ENCODE measurements at regions of chr2 and their contacts with region 1.

Region 1: DNA sequence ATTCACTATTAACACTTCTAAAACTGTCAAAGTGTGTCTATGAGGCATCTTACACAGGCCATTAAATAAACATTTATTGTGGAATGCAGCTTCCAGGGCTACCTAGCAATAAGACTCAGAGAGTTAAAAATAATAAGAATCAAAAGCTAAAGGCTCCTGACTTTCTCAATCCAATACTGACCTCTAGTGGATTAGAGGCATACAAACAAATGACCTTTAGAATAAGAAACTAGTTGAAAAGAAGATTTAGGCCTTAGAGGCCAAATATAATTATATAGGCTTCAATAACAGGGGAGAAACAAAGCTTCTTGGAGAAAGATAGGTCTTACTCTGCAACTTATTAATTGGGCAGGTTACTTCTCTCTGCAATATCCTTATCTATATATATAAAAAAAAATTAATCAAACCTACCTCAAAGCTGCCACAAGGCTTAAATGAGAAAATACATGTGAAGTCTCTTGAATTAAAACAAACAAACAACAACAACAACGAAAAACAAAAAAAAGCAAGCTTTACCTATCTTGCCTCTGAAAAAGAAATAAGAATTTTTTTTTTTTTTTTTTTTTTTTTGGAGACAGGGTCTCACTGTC is 246.1 kb downstream of the EXOC6B start:
- DNase-seq: no peak
- H3K4me3 ChIP-seq: no peak overlapping the region
- H3K27ac ChIP-seq: no peak overlapping the region
- H3K4me1 ChIP-seq: peaks cover 0 to 11% (median 0%) of the 10 kb centered on the region in 4 donors
- H3K27me3 ChIP-seq: no peaks in the 10 kb centered on the region
- CTCF ChIP-seq: peak; percentile 51 to 68 (median 56)
- EP300 ChIP-seq: no peak
- POLR2A ChIP-seq: no peak

Region 2: GRCh38 chr2:71545572-71546274 is 1034.0 kb before region 1 on chr2:
- in situ Hi-C with region 1: loop called in 3 of 4 experiments (anchors 25 kb)
- intact Hi-C with region 1: no loop called
- DNase-seq: peak; percentile 36
- H3K4me3 ChIP-seq: peak overlapping the region in 3 of 4 donors; percentile 3 to 29 (median 11)
- H3K27ac ChIP-seq: peak overlapping the region in 1 of 4 donors; percentile 39
- H3K4me1 ChIP-seq: peaks cover 0 to 19% (median 8%) of the 10 kb centered on the region in 4 donors
- H3K27me3 ChIP-seq: peaks cover 10% of the 10 kb centered on the region
- CTCF ChIP-seq: peak; percentile 54 to 61 (median 58)
- EP300 ChIP-seq: no peak
- POLR2A ChIP-seq: no peak

Region 3: GRCh38 chr2:71558300-71559051 is 1021.2 kb before region 1 on chr2:
- in situ Hi-C with region 1: loop called in 1 of 4 experiments (anchors 25 kb)
- intact Hi-C with region 1: no loop called
- DNase-seq: no peak
- H3K4me3 ChIP-seq: no peak overlapping the region
- H3K27ac ChIP-seq: no peak overlapping the region
- H3K4me1 ChIP-seq: no peaks in the 10 kb centered on the region
- H3K27me3 ChIP-seq: no peaks in the 10 kb centered on the region
- CTCF ChIP-seq: no peak
- EP300 ChIP-seq: no peak
- POLR2A ChIP-seq: no peak

Region 4: GRCh38 chr2:71801969-71802368 is 777.7 kb before region 1 on chr2:
- in situ Hi-C with region 1: loop called in 1 of 4 experiments (anchors 25 kb)
- intact Hi-C with region 1: no loop called
- DNase-seq: peak; percentile 30
- H3K4me3 ChIP-seq: no peak overlapping the region
- H3K27ac ChIP-seq: no peak overlapping the region
- H3K4me1 ChIP-seq: no peaks in the 10 kb centered on the region
- H3K27me3 ChIP-seq: no peaks in the 10 kb centered on the region
- CTCF ChIP-seq: peak in 4 of 5 experiments; percentile 24 to 42 (median 32)
- EP300 ChIP-seq: no peak
- POLR2A ChIP-seq: no peak

Region 5: GRCh38 chr2:71923887-71924533 is 655.7 kb before region 1 on chr2:
- in situ Hi-C with region 1: loop called in 3 of 4 experiments (anchors 10 to 25 kb)
- intact Hi-C with region 1: no loop called
- DNase-seq: peak; percentile 73
- H3K4me3 ChIP-seq: no peak overlapping the region
- H3K27ac ChIP-seq: no peak overlapping the region
- H3K4me1 ChIP-seq: peaks cover 10 to 15% (median 14%) of the 10 kb centered on the region in 4 donors
- H3K27me3 ChIP-seq: no peaks in the 10 kb centered on the region
- CTCF ChIP-seq: peak; percentile 74 to 88 (median 84)
- EP300 ChIP-seq: no peak
- POLR2A ChIP-seq: no peak

Region 6: DNA sequence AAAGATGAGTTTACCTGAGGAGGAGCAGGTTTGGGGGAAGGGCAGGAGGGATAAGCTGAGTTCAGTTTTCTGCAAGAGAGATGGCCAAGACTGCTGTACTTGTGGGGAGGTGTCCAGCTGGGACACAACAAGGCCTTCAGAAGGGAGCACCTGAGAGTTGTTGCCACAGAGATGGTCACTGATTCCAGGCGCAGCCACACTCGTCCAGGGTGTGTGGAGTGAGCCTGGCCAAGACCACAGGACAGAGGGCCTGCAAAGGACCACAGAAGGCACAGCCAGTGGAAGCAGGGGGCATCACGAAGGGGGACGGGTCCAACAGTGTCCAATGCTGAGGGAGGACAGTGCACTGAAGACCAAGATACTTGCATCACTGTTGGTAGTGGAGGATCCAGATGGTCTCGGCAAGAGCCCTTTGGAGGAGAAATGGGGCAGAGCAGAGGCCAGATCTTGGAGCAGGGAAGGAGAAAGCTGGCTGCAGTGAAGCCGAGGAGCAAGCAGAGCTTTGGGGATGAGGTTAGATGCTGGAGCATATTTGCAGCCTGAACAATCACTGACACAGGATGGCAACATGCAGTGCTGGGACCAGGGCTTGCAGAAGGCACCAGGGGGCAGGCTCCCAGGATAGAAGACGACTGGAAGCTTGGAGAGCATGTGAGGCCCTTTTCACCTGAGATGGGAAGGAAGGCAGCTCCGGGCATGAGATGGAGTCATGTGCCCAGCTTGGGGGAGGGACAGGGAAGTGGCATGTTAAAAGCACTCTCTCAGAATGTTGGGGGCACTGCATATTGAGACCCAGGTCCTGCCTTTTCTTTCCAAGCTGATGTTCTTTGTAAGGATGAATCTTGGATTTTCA is 646.0 kb before region 1 on chr2:
- in situ Hi-C with region 1: loop called in 2 of 4 experiments (anchors 25 kb)
- intact Hi-C with region 1: no loop called
- DNase-seq: no peak
- H3K4me3 ChIP-seq: no peak overlapping the region
- H3K27ac ChIP-seq: no peak overlapping the region
- H3K4me1 ChIP-seq: peaks cover 0 to 17% (median 7%) of the 10 kb centered on the region in 4 donors
- H3K27me3 ChIP-seq: no peaks in the 10 kb centered on the region
- CTCF ChIP-seq: no peak
- EP300 ChIP-seq: no peak
- POLR2A ChIP-seq: no peak

Measured in transverse colon (tissue), 4 donors.